ENCODE measurements at regions of chrX and their contacts with region 1.

Region 1: GRCh38 chrX:132101799-132102198 is 26.0 kb downstream of the FRMD7 start:
- DNase-seq: no peak
- H3K4me3 ChIP-seq: no peak overlapping the region
- H3K4me3 Mint-ChIP-seq: no peak overlapping the region
- H3K27ac Mint-ChIP-seq: no peak overlapping the region
- H3K4me1 ChIP-seq: peaks cover 11% of the 10 kb centered on the region
- H3K4me1 Mint-ChIP-seq: peaks cover 10% of the 10 kb centered on the region
- H3K27me3 ChIP-seq: no peaks in the 10 kb centered on the region
- H3K27me3 Mint-ChIP-seq: no peaks in the 10 kb centered on the region
- CTCF ChIP-seq: no peak

Region 2: DNA sequence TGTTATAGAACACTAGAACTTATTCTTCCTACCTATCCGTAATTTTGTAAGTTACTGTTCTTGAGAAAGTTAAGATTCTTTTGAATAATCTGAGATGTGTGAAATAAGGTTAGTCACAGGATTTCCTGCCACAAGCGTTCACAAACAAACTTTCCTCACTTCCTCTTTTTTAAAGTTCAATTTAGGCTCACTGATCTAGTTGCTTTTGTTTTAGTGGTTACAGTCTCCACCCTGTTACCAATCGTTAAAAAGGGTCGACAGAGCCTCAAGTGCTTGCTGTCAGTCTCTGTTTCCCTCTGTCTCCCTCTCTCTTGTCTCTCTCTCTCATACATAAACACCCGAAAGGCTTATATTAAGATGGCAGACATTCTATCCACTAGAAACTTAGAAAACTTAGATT is 114.5 kb before region 1 on chrX:
- CTCF ChIA-PET with region 1: no interaction called
- POLR2A ChIA-PET with region 1: no interaction called
- intact Hi-C with region 1: no loop called
- DNase-seq: no peak
- H3K4me3 ChIP-seq: no peak overlapping the region
- H3K4me3 Mint-ChIP-seq: no peak overlapping the region
- H3K27ac Mint-ChIP-seq: no peak overlapping the region
- H3K4me1 ChIP-seq: peaks cover 6% of the 10 kb centered on the region
- H3K4me1 Mint-ChIP-seq: peaks cover 9% of the 10 kb centered on the region
- H3K27me3 ChIP-seq: no peaks in the 10 kb centered on the region
- H3K27me3 Mint-ChIP-seq: peaks cover under 1% of the 10 kb centered on the region
- CTCF ChIP-seq: no peak

Region 3: DNA sequence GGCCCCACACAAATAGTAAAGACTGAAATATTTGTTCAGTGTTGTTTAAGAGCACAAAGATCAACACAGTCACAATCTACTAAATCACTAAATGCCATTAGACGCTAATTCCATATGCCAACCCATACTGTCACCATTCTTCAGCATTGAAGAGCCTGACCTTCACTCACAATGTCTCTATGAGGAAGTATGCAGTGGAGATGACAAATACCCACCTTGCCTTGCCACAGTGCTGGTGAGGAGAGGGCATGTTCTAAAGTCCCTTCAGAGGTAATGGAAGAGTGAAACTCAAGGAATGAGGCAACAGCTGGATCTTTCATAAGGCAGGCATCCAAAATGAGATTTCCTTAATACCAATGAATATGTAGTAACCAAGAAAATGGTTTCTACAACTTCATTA is 24.4 kb before region 1 on chrX:
- CTCF ChIA-PET with region 1: no interaction called
- POLR2A ChIA-PET with region 1: no interaction called
- intact Hi-C with region 1: loop called (anchors 1 kb)
- DNase-seq: no peak
- H3K4me3 ChIP-seq: no peak overlapping the region
- H3K4me3 Mint-ChIP-seq: no peak overlapping the region
- H3K27ac Mint-ChIP-seq: no peak overlapping the region
- H3K4me1 ChIP-seq: peaks cover 13% of the 10 kb centered on the region
- H3K4me1 Mint-ChIP-seq: peaks cover 19% of the 10 kb centered on the region
- H3K27me3 ChIP-seq: no peaks in the 10 kb centered on the region
- H3K27me3 Mint-ChIP-seq: no peaks in the 10 kb centered on the region
- CTCF ChIP-seq: no peak

Region 4: DNA sequence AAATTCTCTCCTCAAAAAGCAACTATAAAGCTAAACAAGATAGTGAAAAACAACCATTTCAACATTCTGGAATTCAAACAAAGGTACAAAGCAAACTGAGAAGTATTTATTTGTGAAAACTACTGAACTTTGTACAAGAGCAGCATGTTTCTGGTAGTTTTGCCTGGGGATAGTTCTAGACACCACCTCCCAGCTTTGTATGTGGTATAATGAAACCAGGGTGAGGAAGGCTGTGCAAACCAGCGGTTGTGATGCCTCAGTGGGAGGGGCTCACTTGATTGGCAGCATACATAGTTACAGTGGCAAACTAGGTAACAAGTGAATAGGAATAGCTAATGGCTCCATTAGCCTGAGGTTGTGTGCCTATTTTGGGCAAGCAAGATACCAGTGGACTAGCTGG is 44.7 kb after region 1 on chrX:
- CTCF ChIA-PET with region 1: no interaction called
- POLR2A ChIA-PET with region 1: no interaction called
- intact Hi-C with region 1: no loop called
- DNase-seq: peak in 1 of 2 experiments; percentile 8
- H3K4me3 ChIP-seq: no peak overlapping the region
- H3K4me3 Mint-ChIP-seq: no peak overlapping the region
- H3K27ac Mint-ChIP-seq: no peak overlapping the region
- H3K4me1 ChIP-seq: no peaks in the 10 kb centered on the region
- H3K4me1 Mint-ChIP-seq: peaks cover 15% of the 10 kb centered on the region
- H3K27me3 ChIP-seq: no peaks in the 10 kb centered on the region
- H3K27me3 Mint-ChIP-seq: peaks cover 5% of the 10 kb centered on the region
- CTCF ChIP-seq: no peak